Calu3 (cell line): ENCODE measurements at regions of chr9 and their contacts with region 1.

Region 1: DNA sequence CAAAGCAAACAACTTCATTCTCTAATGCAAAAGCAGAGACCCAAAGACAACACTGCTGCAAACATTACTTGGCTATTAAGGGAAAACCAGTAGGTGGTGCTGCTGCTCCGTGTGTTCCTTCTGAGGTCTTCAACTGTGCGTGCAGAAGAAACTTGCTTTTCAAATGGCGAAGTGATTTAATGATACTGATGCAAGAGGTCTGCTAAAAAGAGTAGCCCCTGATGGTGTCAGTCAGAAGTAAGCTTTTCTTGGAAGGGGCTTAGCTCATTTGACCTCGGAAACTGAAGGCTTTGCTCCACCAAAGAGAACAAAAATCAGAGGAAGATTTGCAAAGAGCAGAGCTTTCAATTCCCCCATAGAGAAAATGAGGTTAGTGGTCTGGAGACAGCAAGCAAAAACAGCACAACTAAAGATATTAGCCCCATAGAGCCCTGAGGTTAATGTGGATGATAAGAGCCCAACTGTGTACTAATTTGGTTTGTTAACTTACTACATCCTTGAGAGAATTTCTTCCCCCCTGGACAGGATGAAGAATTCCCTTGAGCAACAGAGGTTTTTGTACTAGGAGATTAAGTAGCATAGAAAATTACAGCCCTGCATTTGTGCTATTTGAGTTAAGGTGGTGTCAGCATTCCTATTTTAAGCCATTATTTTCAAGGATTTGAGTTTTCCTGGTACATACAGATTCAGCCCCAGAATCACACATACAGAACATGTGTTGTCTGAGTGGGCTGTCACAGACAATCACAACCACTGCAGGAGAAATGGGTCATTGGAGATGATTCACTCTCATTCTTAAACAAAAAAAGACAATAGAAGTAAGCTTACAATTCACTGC is 153.2 kb upstream of the C9orf72 start:
- DNase-seq: peak; percentile 54
- H3K4me3 Mint-ChIP-seq: no peak overlapping the region
- H3K27ac Mint-ChIP-seq: no peak overlapping the region
- H3K4me1 Mint-ChIP-seq: no peaks in the 10 kb centered on the region
- H3K27me3 Mint-ChIP-seq: peaks cover 11% of the 10 kb centered on the region
- CTCF ChIP-seq: peak; percentile 60

Region 2: DNA sequence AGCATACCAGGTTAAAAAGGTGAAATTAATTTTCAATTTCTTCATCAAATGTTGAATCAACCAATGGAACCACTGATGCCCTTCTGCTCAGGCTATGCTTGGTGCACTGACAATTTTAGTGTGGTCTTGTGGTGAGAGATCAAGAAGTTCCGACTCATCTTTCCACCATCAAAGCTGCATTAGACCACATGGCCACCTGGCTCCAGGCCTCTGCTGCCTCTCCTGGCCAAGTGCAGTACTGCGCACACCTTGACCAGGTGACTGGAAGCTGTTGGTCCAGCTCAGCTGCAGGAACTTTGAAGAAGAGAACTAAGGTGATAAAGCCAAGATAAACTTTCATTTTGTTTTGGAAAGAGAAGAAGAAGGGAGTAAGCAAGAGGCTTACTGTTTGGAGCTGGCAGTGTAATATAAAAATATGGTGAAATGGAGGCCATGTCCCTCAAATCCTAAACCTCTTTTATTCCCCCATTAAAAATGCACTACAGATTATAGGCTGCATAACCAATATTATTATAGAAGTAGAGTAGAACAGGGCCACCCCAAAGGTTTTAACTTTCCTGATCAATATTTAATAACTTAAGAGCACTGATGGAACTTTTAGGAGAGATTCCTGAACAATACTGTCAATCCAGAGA is 162.3 kb after region 1 on chr9:
- CTCF ChIA-PET with region 1: interaction called, 3 read pairs
- intact Hi-C with region 1: loop called (anchors 2 kb)
- DNase-seq: peak; percentile 70
- H3K4me3 Mint-ChIP-seq: no peak overlapping the region
- H3K27ac Mint-ChIP-seq: no peak overlapping the region
- H3K4me1 Mint-ChIP-seq: no peaks in the 10 kb centered on the region
- H3K27me3 Mint-ChIP-seq: peaks cover 5% of the 10 kb centered on the region
- CTCF ChIP-seq: peak; percentile 72

Region 3: GRCh38 chr9:28073270-28073669 is 346.8 kb after region 1 on chr9:
- CTCF ChIA-PET with region 1: interaction called, 8 read pairs
- intact Hi-C with region 1: loop called (anchors 1 kb)
- DNase-seq: peak; percentile 43
- H3K4me3 Mint-ChIP-seq: no peak overlapping the region
- H3K27ac Mint-ChIP-seq: no peak overlapping the region
- H3K4me1 Mint-ChIP-seq: no peaks in the 10 kb centered on the region
- H3K27me3 Mint-ChIP-seq: no peaks in the 10 kb centered on the region
- CTCF ChIP-seq: peak; percentile 33